ENCODE measurements at regions of chr6 and their contacts with region 1.

Region 1: DNA sequence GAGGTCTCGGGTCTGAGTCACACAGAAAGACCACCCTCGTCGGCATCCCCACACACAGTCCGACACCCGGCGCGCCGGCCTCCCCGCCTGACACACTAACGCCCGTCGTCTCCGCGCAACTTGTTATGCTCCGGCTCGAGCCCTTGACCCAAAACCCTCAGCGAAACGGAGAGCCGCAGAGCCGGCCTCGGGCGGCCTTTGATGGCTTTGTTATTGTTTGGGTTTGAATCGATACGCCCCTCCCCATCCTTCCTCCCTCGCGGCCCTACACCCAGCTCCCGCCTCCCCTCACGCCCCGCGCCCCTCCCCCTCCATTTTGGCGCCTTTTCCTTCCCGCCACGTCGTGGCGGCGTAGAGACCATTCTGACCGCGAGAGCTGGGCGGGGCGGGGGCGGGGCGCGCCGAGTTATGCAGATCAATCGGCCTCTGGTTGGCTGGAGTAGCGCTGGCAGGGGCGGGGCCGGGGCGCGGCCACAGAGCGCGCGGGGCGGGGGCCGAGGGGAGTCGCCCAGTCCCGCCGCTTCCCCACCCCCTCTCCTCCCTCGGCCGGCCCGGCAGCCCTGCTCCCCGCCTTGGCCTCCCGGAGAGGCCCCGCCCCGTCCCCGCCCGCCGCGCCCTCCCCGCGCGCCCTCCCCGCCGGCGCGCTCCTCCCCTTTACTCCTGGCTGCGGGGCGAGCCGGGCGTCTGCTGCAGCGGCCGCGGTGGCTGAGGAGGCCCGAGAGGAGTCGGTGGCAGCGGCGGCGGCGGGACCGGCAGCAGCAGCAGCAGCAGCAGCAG is at the start of gene PIM1:
- DNase-seq: peak; percentile 100
- H3K4me3 Mint-ChIP-seq: peak within 1 kb of the TSS; percentile 93
- H3K27ac Mint-ChIP-seq: peak within 1 kb of the TSS; percentile 96
- H3K4me1 Mint-ChIP-seq: peaks cover 34% of the 10 kb centered on the region
- H3K27me3 Mint-ChIP-seq: no peaks in the 10 kb centered on the region
- total RNA-seq, gene PIM1: 226 to 227 TPM

Region 2: GRCh38 chr6:36678518-36679027 is 491.1 kb before region 1 on chr6 and contains the start of gene CDKN1A:
- CTCF ChIA-PET with region 1: no interaction called
- intact Hi-C with region 1: loop called (anchors 5 kb)
- DNase-seq: peak; percentile 81
- H3K4me3 Mint-ChIP-seq: peak within 1 kb of the TSS; percentile 99
- H3K27ac Mint-ChIP-seq: peak within 1 kb of the TSS; percentile 86
- H3K4me1 Mint-ChIP-seq: peaks cover 47% of the 10 kb centered on the region
- H3K27me3 Mint-ChIP-seq: peaks cover 13% of the 10 kb centered on the region
- total RNA-seq, gene CDKN1A: 90.1 to 92.3 TPM

Region 3: DNA sequence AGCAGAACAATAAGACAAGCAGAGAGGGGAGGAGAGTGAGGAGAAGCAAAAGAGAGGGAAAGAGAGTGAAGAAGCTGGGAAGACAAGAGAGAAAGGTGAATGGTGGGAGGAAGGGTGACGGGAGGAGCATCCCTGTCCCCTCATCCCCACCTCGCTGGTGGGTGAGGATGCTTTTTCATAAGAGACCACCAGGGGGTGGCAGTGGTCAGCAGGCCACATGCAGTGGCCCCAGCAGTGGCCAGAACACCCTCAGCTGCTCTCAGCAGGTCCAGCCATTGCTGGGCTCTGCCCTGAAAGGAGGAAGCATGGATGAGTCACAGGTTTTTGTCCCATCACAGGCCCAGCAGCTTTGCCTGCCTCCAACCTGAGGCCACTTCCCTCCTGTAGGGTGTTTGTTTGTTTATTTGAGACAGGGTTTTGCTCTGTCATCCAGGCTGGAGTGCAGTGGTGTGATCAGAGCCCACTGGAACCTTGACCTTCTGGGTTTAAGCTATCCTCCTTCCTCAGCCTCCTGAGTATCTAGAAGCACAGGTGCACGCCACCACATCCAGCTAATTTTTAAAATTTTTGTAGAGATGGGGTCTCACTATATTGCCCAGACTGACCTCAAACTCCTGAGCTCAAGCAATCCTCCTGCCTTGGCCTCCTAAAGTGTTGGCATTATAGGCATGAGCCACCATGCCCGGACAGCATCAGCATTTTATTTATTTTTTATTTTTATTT is 140.3 kb before region 1 on chr6:
- CTCF ChIA-PET with region 1: interaction called, 265 read pairs
- intact Hi-C with region 1: loop called (anchors 1 kb)
- DNase-seq: peak; percentile 67
- H3K4me3 Mint-ChIP-seq: no peak overlapping the region
- H3K27ac Mint-ChIP-seq: peak overlapping the region; percentile 26
- H3K4me1 Mint-ChIP-seq: peaks cover 46% of the 10 kb centered on the region
- H3K27me3 Mint-ChIP-seq: no peaks in the 10 kb centered on the region

Region 4: GRCh38 chr6:37102279-37103168 is 67.2 kb before region 1 on chr6:
- CTCF ChIA-PET with region 1: interaction called, 9 read pairs
- intact Hi-C with region 1: loop called (anchors 1 kb)
- DNase-seq: peak; percentile 83
- H3K4me3 Mint-ChIP-seq: peak overlapping the region; percentile 58
- H3K27ac Mint-ChIP-seq: peak overlapping the region; percentile 65
- H3K4me1 Mint-ChIP-seq: peaks cover 23% of the 10 kb centered on the region
- H3K27me3 Mint-ChIP-seq: no peaks in the 10 kb centered on the region

Region 5: DNA sequence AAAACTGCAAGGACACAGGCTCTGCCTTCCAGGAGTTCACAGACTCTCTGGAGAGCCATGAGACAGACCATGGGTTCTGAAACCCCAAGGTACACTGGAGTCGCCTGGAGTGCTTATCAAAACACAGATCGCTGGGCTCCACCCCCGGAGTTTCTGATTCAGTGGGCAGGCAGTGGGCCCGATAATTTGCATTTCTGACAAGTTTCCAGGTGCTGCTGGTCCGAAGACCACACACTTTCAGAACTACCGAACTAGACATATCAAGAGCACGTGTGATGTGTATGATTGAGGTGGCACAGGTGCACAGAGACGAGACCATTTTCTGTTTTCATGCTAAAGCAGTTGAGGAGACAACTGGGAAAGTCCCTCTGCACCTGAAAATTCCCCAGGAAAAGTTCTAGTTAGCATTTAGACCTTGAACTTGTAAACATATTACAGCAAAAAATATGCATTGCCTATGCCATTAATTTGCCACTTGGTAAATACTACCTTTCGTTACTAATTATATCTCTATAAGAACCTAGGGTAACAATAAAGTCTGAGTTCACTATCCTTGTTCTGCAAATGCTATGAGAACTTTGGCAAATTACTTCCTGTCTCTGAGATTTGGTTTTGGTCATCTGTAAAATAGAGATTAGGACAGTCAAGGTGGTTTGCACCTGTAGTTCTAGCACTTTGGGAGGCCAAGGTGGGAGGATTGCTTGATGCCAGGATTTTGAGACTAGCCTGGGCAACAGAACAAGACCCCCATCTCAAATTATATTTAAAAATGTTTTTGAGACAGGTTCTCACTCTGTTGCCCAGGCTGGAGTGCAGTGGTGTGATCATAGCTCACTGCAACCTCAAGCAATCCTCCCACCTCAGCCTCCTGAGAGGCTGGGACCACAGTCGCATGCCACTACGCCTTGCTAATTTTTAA is 14.0 kb before region 1 on chr6:
- CTCF ChIA-PET with region 1: interaction called, 10 read pairs
- intact Hi-C with region 1: loop called (anchors 1 kb)
- DNase-seq: peak; percentile 87
- H3K4me3 Mint-ChIP-seq: peak overlapping the region; percentile 39
- H3K27ac Mint-ChIP-seq: peak overlapping the region; percentile 90
- H3K4me1 Mint-ChIP-seq: peaks cover 32% of the 10 kb centered on the region
- H3K27me3 Mint-ChIP-seq: no peaks in the 10 kb centered on the region

Region 6: GRCh38 chr6:37207903-37208456 is 38.3 kb after region 1 on chr6:
- CTCF ChIA-PET with region 1: interaction called, 173 read pairs
- intact Hi-C with region 1: loop called (anchors 1 kb)
- DNase-seq: peak; percentile 98
- H3K4me3 Mint-ChIP-seq: no peak overlapping the region
- H3K27ac Mint-ChIP-seq: peak overlapping the region; percentile 73
- H3K4me1 Mint-ChIP-seq: peaks cover 69% of the 10 kb centered on the region
- H3K27me3 Mint-ChIP-seq: no peaks in the 10 kb centered on the region

Region 7: DNA sequence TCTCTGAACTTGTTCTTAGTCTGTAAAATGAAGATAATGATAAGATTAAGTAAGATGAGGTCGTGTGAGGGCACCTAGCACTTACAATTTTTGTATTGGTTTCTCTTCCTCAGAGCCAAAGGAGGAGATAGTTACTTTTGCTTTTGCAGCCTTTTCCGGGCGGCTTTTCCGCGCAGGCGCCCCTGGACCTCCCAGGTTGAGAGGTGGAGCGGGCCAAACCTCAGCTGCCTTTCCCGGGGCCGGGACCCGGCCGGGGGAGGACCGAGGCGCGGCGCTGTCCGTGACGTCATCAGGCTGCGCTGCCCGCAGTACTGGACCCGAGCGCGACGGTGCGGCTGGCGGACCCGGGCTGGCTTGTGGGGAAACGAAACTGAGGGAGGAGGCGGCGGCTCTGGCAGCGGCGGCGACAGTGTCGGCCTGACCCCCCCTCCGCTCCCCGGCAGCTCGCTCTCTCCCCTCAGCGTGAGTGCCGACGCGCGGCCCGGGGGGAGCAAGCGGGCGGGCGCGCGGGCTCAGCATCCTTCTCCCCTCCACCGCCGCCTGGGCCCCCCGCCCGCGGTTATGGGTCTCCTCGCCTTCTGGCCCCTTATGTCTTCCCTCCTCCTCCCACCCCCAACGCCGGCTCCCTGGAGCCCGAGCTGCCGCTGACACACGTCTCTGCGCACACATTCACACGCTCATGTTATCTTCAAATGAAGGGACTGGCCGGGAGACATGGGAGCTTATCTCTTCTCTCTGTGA is 263.4 kb after region 1 on chr6 and contains the start of gene CMTR1:
- CTCF ChIA-PET with region 1: no interaction called
- intact Hi-C with region 1: loop called (anchors 5 kb)
- DNase-seq: peak; percentile 97
- H3K4me3 Mint-ChIP-seq: peak within 1 kb of the TSS; percentile 97
- H3K27ac Mint-ChIP-seq: peak within 1 kb of the TSS; percentile 97
- H3K4me1 Mint-ChIP-seq: peaks cover 36% of the 10 kb centered on the region
- H3K27me3 Mint-ChIP-seq: no peaks in the 10 kb centered on the region
- total RNA-seq, gene CMTR1: 70.9 to 71.3 TPM

Region 8: GRCh38 chr6:37487591-37488380 is 318.1 kb after region 1 on chr6:
- CTCF ChIA-PET with region 1: no interaction called
- intact Hi-C with region 1: no loop called
- DNase-seq: peak; percentile 4
- H3K4me3 Mint-ChIP-seq: no peak overlapping the region
- H3K27ac Mint-ChIP-seq: no peak overlapping the region
- H3K4me1 Mint-ChIP-seq: peaks cover 51% of the 10 kb centered on the region
- H3K27me3 Mint-ChIP-seq: no peaks in the 10 kb centered on the region

Measured in activated naive CD4-positive, alpha-beta T cell treated with anti-CD3 and anti-CD28 coated beads for 36 hours (primary cell).